ENCODE measurements at regions of chr12 and their contacts with region 1.

Region 1: GRCh38 chr12:67456431-67456901 is 187.3 kb downstream of the CAND1 start:
- DNase-seq: peak; percentile 62
- H3K4me3 ChIP-seq: no peak overlapping the region
- H3K27me3 ChIP-seq: no peaks in the 10 kb centered on the region
- CTCF ChIP-seq: no peak

Region 2: GRCh38 chr12:67482751-67483671 is 26.5 kb after region 1 on chr12:
- CTCF ChIA-PET with region 1: interaction called, 3 read pairs
- POLR2A ChIA-PET with region 1: interaction called, 14 read pairs
- DNase-seq: peak; percentile 39
- H3K4me3 ChIP-seq: no peak overlapping the region
- H3K27me3 ChIP-seq: no peaks in the 10 kb centered on the region
- CTCF ChIP-seq: no peak

Region 3: DNA sequence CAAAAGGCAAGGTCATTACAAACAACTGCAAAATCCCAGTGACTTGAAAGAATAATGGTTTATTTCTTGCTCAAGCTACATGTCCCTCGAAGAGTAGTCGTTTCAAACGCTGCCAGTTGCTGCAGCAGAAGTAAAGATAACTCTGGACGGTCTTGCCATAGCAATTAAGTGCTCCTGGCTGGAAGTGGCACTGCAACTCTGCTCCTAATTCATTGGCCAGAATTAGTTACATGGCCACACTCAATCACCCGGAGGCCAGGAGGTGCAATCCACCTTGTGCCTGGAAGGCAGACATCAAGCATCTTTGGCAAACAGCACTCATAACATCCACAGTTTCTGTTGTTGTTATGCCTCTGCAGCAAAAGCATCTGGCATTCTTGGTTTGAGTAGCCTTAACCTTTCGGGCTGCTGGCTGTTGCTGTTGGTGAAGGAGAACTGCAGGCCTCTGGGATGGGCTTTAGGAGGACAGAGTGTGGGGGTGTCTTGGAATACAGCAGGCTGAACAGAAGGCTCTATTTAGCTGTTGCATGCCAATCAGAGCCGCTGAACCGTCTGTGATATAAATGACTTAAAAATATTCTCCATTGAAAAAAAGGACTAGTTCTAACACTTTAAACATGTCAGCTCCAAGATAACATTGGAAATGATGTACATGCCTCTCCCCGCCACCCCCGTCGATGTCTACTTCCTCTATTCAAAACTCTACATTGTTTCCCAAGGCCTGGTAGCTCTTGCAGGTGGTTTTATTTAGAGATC is 68.6 kb after region 1 on chr12:
- CTCF ChIA-PET with region 1: no interaction called
- POLR2A ChIA-PET with region 1: no interaction called
- DNase-seq: no peak
- H3K4me3 ChIP-seq: no peak overlapping the region
- H3K27me3 ChIP-seq: no peaks in the 10 kb centered on the region
- CTCF ChIP-seq: no peak

Region 4: GRCh38 chr12:67562513-67563287 is 106.2 kb after region 1 on chr12:
- CTCF ChIA-PET with region 1: no interaction called
- POLR2A ChIA-PET with region 1: no interaction called
- DNase-seq: no peak
- H3K4me3 ChIP-seq: no peak overlapping the region
- H3K27me3 ChIP-seq: 0 out of 2 replicates have a peak, but pooled peaks cover 1% of the 10 kb centered on the region
- CTCF ChIP-seq: no peak